GM12878 (cell line): ENCODE measurements at regions of chr14 and their contacts with region 1.

Region 1: DNA sequence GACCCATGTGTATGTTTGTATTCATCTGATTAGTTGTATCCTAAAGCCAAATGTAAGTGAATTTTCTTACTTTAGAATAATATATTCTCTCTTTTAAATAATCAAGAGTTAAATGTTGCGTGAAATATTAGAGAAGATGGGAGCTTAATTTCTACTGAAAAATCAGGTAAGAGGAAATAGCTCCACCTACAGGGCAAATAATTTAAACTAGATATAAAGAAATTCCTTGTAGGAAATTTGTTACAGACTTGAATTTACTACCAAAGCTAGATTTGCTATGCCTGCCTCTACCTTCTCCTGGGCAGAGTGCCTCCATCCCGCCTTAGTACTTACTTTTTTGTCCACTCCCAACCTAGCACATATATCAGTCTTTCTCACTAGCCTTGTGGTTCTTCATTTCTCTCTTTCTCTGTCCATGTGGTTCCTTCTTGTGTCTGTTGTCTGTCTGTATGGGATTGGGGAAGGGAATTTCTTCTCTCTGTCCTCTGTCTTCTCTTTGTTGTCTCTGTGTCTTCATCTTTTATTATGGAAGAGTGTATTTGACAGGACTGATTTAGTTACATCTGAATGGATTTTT is 44.7 kb downstream of the PALS1 start:
- DNase-seq: no peak
- ATAC-seq: no peak
- H3K4me3 ChIP-seq: no peak overlapping the region
- H3K27ac ChIP-seq: no peak overlapping the region
- H3K4me1 ChIP-seq: no peaks in the 10 kb centered on the region
- H3K27me3 ChIP-seq: no peaks in the 10 kb centered on the region
- CTCF ChIP-seq: peak in 2 of 3 experiments; percentile 38 to 46; a peak in 2 of 6 replicates
- EP300 ChIP-seq: no peak
- POLR2A ChIP-seq: no peak
- RAD21 ChIP-seq: peak; percentile 60

Region 2: GRCh38 chr14:66359500-66359899 is 926.5 kb before region 1 on chr14:
- CTCF ChIA-PET with region 1: interaction called, 25 read pairs
- POLR2A ChIA-PET with region 1: no interaction called
- RAD21 ChIA-PET with region 1: interaction called, 11 read pairs
- SMC1A ChIA-PET with region 1: interaction called, 4 read pairs
- in situ Hi-C with region 1: no loop called
- intact Hi-C with region 1: no loop called
- DNase-seq: peak; percentile 15
- ATAC-seq: peak; percentile 24; the same call in 2 of the 3 replicates
- H3K4me3 ChIP-seq: no peak overlapping the region
- H3K27ac ChIP-seq: no peak overlapping the region
- H3K4me1 ChIP-seq: no peaks in the 10 kb centered on the region
- H3K27me3 ChIP-seq: no peaks in the 10 kb centered on the region
- CTCF ChIP-seq: peak; percentile 21 to 66 (median 53); a peak in 5 of 6 replicates
- EP300 ChIP-seq: no peak
- POLR2A ChIP-seq: no peak
- RAD21 ChIP-seq: peak; percentile 97

Region 3: DNA sequence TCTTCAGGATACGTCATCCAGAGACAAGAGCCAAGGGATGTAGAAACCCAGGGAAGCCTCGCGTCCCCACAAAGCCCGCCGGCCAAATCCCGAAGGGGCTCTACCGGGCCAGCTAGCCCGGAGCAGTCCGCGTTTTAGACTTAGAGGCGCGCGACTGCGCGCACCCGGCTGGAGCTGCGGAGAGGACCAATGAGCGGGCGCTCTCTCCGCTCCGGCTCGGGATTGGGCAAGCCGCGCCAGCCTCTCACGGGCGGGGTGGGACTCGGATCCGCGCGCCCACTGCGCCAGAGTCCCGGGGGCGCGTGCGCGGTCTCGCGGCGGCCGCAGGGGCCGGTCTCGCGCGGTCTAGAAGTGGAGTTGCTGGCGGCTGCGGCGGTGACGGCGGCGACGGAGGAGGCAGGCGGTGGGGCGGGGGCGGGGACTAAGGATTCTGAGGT is 45.0 kb before region 1 on chr14:
- CTCF ChIA-PET with region 1: interaction called, 8 read pairs
- POLR2A ChIA-PET with region 1: interaction called, 10 read pairs
- RAD21 ChIA-PET with region 1: interaction called, 3 read pairs
- SMC1A ChIA-PET with region 1: interaction called, 3 read pairs
- in situ Hi-C with region 1: no loop called
- intact Hi-C with region 1: no loop called
- DNase-seq: peak; percentile 71
- ATAC-seq: peak; percentile 97
- H3K4me3 ChIP-seq: peak overlapping the region; percentile 84
- H3K27ac ChIP-seq: peak overlapping the region; percentile 85
- H3K4me1 ChIP-seq: peaks cover 4% of the 10 kb centered on the region; the same call in 1 of the 2 replicates
- H3K27me3 ChIP-seq: no peaks in the 10 kb centered on the region
- CTCF ChIP-seq: no peak
- EP300 ChIP-seq: no peak
- POLR2A ChIP-seq: peak; percentile 64; the same call in 1 of the 2 replicates
- RAD21 ChIP-seq: no peak

Region 4: GRCh38 chr14:67263499-67264149 is 22.3 kb before region 1 on chr14:
- CTCF ChIA-PET with region 1: interaction called, 17 read pairs
- POLR2A ChIA-PET with region 1: no interaction called
- RAD21 ChIA-PET with region 1: no interaction called
- SMC1A ChIA-PET with region 1: interaction called, 4 read pairs
- in situ Hi-C with region 1: no loop called
- intact Hi-C with region 1: no loop called
- DNase-seq: no peak
- ATAC-seq: no peak
- H3K4me3 ChIP-seq: no peak overlapping the region
- H3K27ac ChIP-seq: no peak overlapping the region
- H3K4me1 ChIP-seq: no peaks in the 10 kb centered on the region
- H3K27me3 ChIP-seq: no peaks in the 10 kb centered on the region
- CTCF ChIP-seq: no peak
- EP300 ChIP-seq: no peak
- POLR2A ChIP-seq: no peak
- RAD21 ChIP-seq: no peak

Region 5: DNA sequence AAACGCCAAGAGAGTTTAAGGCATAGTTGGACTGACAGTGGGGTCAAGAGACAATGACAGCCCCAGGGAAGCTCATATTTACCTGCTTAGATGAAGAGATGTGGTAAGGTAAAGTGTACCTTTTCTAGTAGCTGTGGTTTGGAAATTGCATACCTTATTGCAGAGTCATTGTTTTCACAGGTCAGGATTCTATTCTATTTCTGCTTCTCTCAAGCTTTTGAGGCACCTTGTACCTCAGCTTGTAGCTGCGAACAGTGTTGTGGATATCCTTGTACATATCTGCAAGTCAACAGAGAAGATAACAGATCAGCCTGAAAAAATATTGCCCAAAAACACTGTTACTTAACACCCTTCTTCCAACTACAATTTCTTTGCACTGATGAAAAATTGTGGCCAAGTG is 25.9 kb after region 1 on chr14:
- CTCF ChIA-PET with region 1: interaction called, 10 read pairs
- POLR2A ChIA-PET with region 1: no interaction called
- RAD21 ChIA-PET with region 1: no interaction called
- SMC1A ChIA-PET with region 1: no interaction called
- in situ Hi-C with region 1: no loop called
- intact Hi-C with region 1: no loop called
- DNase-seq: no peak
- ATAC-seq: no peak
- H3K4me3 ChIP-seq: no peak overlapping the region
- H3K27ac ChIP-seq: no peak overlapping the region
- H3K4me1 ChIP-seq: no peaks in the 10 kb centered on the region
- H3K27me3 ChIP-seq: no peaks in the 10 kb centered on the region
- CTCF ChIP-seq: no peak
- EP300 ChIP-seq: no peak
- POLR2A ChIP-seq: no peak
- RAD21 ChIP-seq: no peak

Region 6: DNA sequence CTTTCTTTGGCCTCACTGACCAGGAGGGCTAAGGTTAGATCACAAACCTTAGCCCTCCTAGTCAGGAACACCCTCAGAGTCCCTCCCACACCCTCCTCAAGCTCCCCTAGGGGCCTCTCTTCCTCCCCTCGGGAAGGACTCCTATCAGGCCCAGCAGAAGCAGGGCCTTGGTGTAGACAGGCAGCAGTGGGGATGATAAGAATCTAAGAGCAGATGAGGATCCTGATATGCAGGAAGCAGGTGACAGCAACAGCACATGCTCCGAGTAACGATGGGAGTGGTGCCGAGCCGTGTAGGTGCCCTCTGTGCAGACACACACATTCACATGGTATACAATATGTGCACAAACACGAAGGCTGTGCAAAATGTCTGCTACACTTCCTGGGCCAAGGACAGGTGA is 105.3 kb after region 1 on chr14:
- CTCF ChIA-PET with region 1: no interaction called
- POLR2A ChIA-PET with region 1: no interaction called
- RAD21 ChIA-PET with region 1: no interaction called
- SMC1A ChIA-PET with region 1: no interaction called
- in situ Hi-C with region 1: no loop called
- intact Hi-C with region 1: no loop called
- DNase-seq: no peak
- ATAC-seq: no peak; the same call in 2 of the 3 replicates
- H3K4me3 ChIP-seq: no peak overlapping the region
- H3K27ac ChIP-seq: no peak overlapping the region
- H3K4me1 ChIP-seq: no peaks in the 10 kb centered on the region
- H3K27me3 ChIP-seq: no peaks in the 10 kb centered on the region
- CTCF ChIP-seq: no peak
- EP300 ChIP-seq: no peak
- POLR2A ChIP-seq: no peak
- RAD21 ChIP-seq: no peak

Region 7: GRCh38 chr14:67704484-67705089 is 418.6 kb after region 1 on chr14:
- CTCF ChIA-PET with region 1: no interaction called
- POLR2A ChIA-PET with region 1: no interaction called
- RAD21 ChIA-PET with region 1: no interaction called
- SMC1A ChIA-PET with region 1: no interaction called
- in situ Hi-C with region 1: no loop called
- intact Hi-C with region 1: no loop called
- DNase-seq: peak; percentile 45
- ATAC-seq: peak; percentile 95
- H3K4me3 ChIP-seq: no peak overlapping the region
- H3K27ac ChIP-seq: no peak overlapping the region
- H3K4me1 ChIP-seq: no peaks in the 10 kb centered on the region
- H3K27me3 ChIP-seq: no peaks in the 10 kb centered on the region
- CTCF ChIP-seq: peak; percentile 70 to 89 (median 77)
- EP300 ChIP-seq: no peak
- POLR2A ChIP-seq: no peak
- RAD21 ChIP-seq: peak; percentile 94